IMR-90 (cell line): ENCODE measurements at regions of chr12 and their contacts with region 1.

Region 1: DNA sequence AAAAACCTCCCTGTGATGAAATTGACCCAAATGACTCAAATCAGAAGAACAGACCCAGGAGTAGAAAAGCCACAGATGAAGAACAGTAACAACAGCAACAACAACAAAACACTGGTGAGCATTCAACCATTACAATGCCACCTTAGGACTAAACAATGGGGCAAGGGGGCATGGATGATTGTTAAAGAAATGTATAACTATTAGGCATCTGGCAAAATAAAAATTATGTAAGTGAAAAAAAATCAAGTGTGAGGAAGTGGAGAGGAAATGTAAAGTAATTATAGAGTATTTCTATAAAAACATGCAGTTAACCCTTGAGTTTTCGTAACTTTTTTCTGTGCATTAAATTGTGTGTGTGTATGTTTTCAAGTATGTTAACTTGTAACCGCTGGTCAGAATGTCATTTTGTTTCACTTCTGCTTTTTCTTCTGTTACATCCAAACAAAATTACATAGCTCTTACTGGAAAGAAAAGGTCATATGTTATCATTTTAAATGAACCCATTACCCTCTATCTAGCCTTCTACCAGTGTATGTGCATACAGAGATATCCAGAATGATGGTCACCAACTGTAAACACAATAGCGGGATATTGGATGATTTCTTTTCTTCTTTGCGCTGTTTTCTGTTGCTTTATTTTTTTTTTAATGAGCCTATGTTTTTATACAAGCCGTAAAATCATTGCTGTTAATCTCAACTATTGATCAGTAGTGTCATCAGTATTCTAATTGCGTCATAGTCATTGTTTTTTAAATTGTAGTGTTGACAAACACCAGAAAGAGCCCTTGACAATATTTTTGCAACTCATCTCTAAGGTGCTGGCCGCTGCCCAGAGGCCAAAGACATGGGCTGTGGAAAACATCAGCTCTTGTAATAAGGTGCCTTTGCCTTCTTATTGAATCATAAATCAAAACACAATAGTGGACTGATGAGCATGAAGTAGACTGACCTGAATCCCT is 170.6 kb downstream of the CRADD start:
- DNase-seq: no peak
- ATAC-seq: no peak
- H3K4me3 ChIP-seq: no peak overlapping the region
- H3K27ac ChIP-seq: no peak overlapping the region
- H3K4me1 ChIP-seq: no peaks in the 10 kb centered on the region
- H3K27me3 ChIP-seq: no peaks in the 10 kb centered on the region
- CTCF ChIP-seq: no peak
- POLR2A ChIP-seq: no peak
- RAD21 ChIP-seq: no peak

Region 2: DNA sequence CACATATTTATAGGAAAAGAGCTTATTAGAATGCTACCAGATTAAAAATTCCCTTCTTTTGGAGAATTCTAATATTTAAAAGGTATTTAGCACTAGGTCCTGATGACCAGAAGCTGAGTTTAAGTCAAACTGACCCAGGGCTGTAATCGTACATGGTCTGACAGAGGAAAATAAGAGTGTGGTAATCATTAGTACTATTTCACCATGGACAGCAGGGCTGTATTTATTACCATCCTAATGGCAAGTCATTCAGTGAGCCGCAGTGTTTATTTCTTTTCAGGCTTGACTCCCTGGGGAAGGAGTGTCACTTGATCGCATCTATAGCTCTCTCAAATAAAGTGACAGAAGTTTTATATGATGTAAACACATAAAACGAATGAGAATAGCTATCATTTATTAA is 1964.0 kb before region 1 on chr12:
- CTCF ChIA-PET with region 1: no interaction called
- POLR2A ChIA-PET with region 1: no interaction called
- dilution Hi-C with region 1: no loop called
- in situ Hi-C with region 1: no loop called
- intact Hi-C with region 1: loop called (anchors 10 kb)
- DNase-seq: peak; percentile 10
- ATAC-seq: no peak
- H3K4me3 ChIP-seq: no peak overlapping the region
- H3K27ac ChIP-seq: no peak overlapping the region
- H3K4me1 ChIP-seq: no peaks in the 10 kb centered on the region
- H3K27me3 ChIP-seq: no peaks in the 10 kb centered on the region
- CTCF ChIP-seq: no peak
- POLR2A ChIP-seq: no peak
- RAD21 ChIP-seq: no peak

Region 3: GRCh38 chr12:94628819-94629472 is 781.1 kb after region 1 on chr12:
- CTCF ChIA-PET with region 1: no interaction called
- POLR2A ChIA-PET with region 1: no interaction called
- dilution Hi-C with region 1: no loop called
- in situ Hi-C with region 1: no loop called
- intact Hi-C with region 1: no loop called
- DNase-seq: no peak
- ATAC-seq: no peak
- H3K4me3 ChIP-seq: no peak overlapping the region
- H3K27ac ChIP-seq: no peak overlapping the region
- H3K4me1 ChIP-seq: no peaks in the 10 kb centered on the region
- H3K27me3 ChIP-seq: peaks cover 3% of the 10 kb centered on the region
- CTCF ChIP-seq: no peak
- POLR2A ChIP-seq: no peak
- RAD21 ChIP-seq: no peak